ENCODE measurements at regions of chr18 and their contacts with region 1.

Region 1: GRCh38 chr18:36179562-36180355 is 7.5 kb upstream of the MOCOS start:
- DNase-seq: peak; percentile 89 to 90
- ATAC-seq: peak; percentile 36
- H3K4me3 ChIP-seq: no peak overlapping the region
- H3K27ac ChIP-seq: peak overlapping the region in 1 of 2 donors; percentile 15
- H3K4me1 ChIP-seq: no peaks in the 10 kb centered on the region
- H3K27me3 ChIP-seq: no peaks in the 10 kb centered on the region

Region 2: GRCh38 chr18:35770376-35771014 is 409.3 kb before region 1 on chr18:
- intact Hi-C with region 1: no loop called
- DNase-seq: no peak
- ATAC-seq: peak; percentile 22
- H3K4me3 ChIP-seq: no peak overlapping the region
- H3K27ac ChIP-seq: no peak overlapping the region
- H3K4me1 ChIP-seq: no peaks in the 10 kb centered on the region
- H3K27me3 ChIP-seq: no peaks in the 10 kb centered on the region

Region 3: GRCh38 chr18:36139250-36139649 is 40.5 kb before region 1 on chr18:
- intact Hi-C with region 1: loop called in 1 of 2 experiments (anchors 5 kb)
- DNase-seq: no peak
- ATAC-seq: no peak
- H3K4me3 ChIP-seq: no peak overlapping the region
- H3K27ac ChIP-seq: no peak overlapping the region
- H3K4me1 ChIP-seq: no peaks in the 10 kb centered on the region
- H3K27me3 ChIP-seq: no peaks in the 10 kb centered on the region

Measured in aorta (tissue), 5 donors.